Activated B cell treated with CpG ODN at 0.5 μM for 24 hours (primary cell): ENCODE measurements at regions of chr22 and their contacts with region 1.

Region 1: DNA sequence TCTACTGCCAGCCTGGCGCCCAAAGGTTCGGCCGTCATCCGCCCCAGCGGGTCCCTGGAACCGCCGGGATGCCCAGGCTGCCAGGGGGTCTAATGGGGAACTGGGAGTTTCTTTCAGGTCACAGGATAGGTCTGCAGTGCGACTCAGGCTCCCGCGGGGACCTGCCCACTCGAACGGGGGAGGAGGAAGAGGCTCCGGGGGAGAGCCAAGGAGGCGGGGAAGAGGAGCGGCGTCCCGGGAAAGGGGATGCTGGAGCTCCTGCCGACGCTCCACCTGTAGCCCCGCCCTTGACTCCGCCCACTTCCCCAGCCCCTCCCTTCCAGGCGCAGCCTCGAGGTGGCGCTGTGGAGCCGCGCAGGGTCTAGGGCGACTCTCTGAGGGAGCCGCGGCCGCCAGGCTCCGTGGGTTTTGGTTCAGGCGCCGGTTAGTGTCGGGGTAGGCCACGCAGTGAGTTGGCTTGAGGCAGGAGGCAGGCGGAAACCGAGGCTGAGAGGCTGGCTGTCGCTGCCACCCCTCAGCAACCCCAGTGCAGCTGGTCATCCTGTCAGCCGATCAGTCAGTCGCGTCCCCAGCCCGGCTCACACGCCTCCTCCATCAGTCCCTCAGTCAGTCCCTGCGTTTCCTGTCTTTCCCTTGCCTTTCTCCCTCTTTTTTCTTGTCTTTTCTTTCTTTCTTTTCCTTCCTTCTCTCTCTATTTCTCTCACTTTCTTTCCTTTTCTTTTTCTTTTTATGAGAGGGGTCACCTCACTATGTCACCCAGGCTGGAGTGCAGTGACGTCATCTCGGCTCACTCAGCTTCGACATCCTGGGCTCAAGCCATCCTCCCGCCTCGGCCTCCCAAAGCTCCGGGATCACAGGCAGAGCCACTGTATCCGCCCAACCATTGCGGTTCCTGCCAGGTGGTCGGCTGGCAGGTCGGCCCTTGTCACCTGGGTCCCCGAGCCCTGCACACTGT is 26.4 kb downstream of the YWHAH start:
- DNase-seq: peak; percentile 86
- ATAC-seq: peak; percentile 95
- H3K4me3 Mint-ChIP-seq: peak overlapping the region; percentile 76
- H3K27ac Mint-ChIP-seq: peak overlapping the region; percentile 65
- H3K4me1 Mint-ChIP-seq: peaks cover 18% of the 10 kb centered on the region
- H3K27me3 Mint-ChIP-seq: no peaks in the 10 kb centered on the region
- CTCF ChIP-seq: peak; percentile 30

Region 2: GRCh38 chr22:31561238-31561887 is 409.4 kb before region 1 on chr22:
- CTCF ChIA-PET with region 1: interaction called, 5 read pairs
- POLR2A ChIA-PET with region 1: no interaction called
- intact Hi-C with region 1: loop called (anchors 5 kb)
- DNase-seq: peak; percentile 28
- ATAC-seq: peak; percentile 91
- H3K4me3 Mint-ChIP-seq: no peak overlapping the region
- H3K27ac Mint-ChIP-seq: no peak overlapping the region
- H3K4me1 Mint-ChIP-seq: no peaks in the 10 kb centered on the region
- H3K27me3 Mint-ChIP-seq: no peaks in the 10 kb centered on the region
- CTCF ChIP-seq: no peak

Region 3: DNA sequence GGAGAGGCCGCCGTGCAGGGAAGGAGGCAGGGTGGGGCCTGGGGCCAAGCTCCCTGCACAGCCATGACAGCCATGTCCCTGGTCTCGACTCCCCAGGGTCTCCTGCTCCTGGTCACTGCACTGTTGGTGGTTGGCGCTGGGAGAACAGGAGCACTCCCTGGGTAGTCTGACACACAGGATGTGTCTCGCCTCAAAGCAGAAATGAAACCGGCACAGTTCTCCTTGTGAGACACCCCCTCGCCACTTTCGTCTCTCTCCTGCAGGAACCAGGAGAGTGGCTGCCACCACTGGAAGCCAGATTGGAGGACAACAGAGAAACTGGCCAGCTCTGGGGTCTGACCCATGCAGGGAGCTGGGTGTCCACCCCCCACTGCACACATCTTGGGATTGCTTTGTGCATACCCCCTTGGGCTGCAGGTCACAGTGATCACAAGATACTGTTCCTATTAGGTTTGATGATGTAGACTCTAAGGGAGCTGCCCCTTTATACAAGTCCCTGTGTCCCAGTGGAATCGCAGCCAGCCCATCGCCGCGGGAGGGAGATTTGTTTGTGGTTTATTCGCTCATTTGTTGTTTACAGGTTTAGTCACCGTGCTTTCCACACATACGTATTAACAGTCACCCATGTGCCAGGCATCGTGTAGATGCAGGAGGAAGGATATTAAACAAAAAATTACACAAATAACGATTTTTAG is 53.4 kb before region 1 on chr22:
- CTCF ChIA-PET with region 1: no interaction called
- POLR2A ChIA-PET with region 1: no interaction called
- intact Hi-C with region 1: no loop called
- DNase-seq: peak; percentile 34
- ATAC-seq: peak; percentile 79
- H3K4me3 Mint-ChIP-seq: peak overlapping the region; percentile 44
- H3K27ac Mint-ChIP-seq: peak overlapping the region; percentile 30
- H3K4me1 Mint-ChIP-seq: peaks cover 23% of the 10 kb centered on the region
- H3K27me3 Mint-ChIP-seq: no peaks in the 10 kb centered on the region
- CTCF ChIP-seq: no peak

Region 4: GRCh38 chr22:32050678-32051515 is 80.1 kb after region 1 on chr22:
- CTCF ChIA-PET with region 1: no interaction called
- POLR2A ChIA-PET with region 1: no interaction called
- intact Hi-C with region 1: no loop called
- DNase-seq: no peak
- ATAC-seq: no peak
- H3K4me3 Mint-ChIP-seq: no peak overlapping the region
- H3K27ac Mint-ChIP-seq: no peak overlapping the region
- H3K4me1 Mint-ChIP-seq: no peaks in the 10 kb centered on the region
- H3K27me3 Mint-ChIP-seq: peaks cover 28% of the 10 kb centered on the region
- CTCF ChIP-seq: no peak

Region 5: GRCh38 chr22:32073823-32074380 is 103.1 kb after region 1 on chr22:
- CTCF ChIA-PET with region 1: no interaction called
- POLR2A ChIA-PET with region 1: no interaction called
- intact Hi-C with region 1: no loop called
- DNase-seq: no peak
- ATAC-seq: no peak
- H3K4me3 Mint-ChIP-seq: no peak overlapping the region
- H3K27ac Mint-ChIP-seq: no peak overlapping the region
- H3K4me1 Mint-ChIP-seq: no peaks in the 10 kb centered on the region
- H3K27me3 Mint-ChIP-seq: peaks cover 25% of the 10 kb centered on the region
- CTCF ChIP-seq: no peak